Caco-2 (cell line): ENCODE measurements at regions of chr7 and their contacts with region 1.

Region 1: GRCh38 chr7:96075510-96076349 is 246.2 kb downstream of the SLC25A13 start:
- DNase-seq: peak; percentile 62 to 75
- H3K4me3 ChIP-seq: peak overlapping the region; percentile 30
- H3K4me3 Mint-ChIP-seq: peak overlapping the region; percentile 72
- H3K27ac Mint-ChIP-seq: no peak overlapping the region
- H3K4me1 ChIP-seq: 0 out of 2 replicates have a peak, but pooled peaks cover 3% of the 10 kb centered on the region
- H3K4me1 Mint-ChIP-seq: no peaks in the 10 kb centered on the region
- H3K27me3 ChIP-seq: no peaks in the 10 kb centered on the region
- H3K27me3 Mint-ChIP-seq: peaks cover 5% of the 10 kb centered on the region
- CTCF ChIP-seq: peak; percentile 91 to 92

Region 2: DNA sequence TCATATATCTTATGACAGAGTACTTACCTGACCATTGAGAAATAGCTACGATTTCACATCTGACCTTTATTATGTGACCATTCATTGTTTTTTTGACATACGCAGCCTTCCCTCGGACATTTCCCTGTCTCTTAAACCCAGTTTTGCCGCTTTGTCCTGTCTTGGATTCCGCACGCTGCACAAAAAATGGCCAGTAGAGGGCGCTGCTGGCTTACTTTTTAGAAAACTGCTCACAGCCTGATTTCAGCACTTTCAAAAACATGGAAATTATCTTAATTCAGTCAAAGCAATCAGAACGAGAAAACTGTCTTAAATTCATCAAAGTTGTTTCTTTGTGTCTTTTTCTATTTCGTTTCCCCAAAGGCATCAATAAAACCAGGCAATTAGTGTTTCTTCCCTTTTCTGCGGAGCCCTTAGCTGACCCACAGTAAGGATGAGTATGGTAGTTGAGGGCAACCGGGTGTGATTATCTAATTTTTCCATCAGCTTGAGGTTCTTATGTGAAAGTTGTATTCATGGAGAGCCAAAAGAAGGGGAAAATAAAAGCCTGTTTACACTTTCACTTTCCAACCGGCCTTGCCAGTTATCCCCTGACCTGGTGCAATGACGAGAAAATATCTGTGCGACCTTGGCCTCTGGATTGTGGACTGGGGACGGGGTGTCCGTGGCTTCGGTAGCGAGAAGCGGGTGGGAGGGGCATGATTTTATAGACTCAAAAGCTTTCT is 159.0 kb before region 1 on chr7:
- CTCF ChIA-PET with region 1: no interaction called
- POLR2A ChIA-PET with region 1: no interaction called
- intact Hi-C with region 1: loop called (anchors 1 kb)
- DNase-seq: peak; percentile 61 to 77
- H3K4me3 ChIP-seq: no peak overlapping the region
- H3K4me3 Mint-ChIP-seq: no peak overlapping the region
- H3K27ac Mint-ChIP-seq: no peak overlapping the region
- H3K4me1 ChIP-seq: no peaks in the 10 kb centered on the region
- H3K4me1 Mint-ChIP-seq: no peaks in the 10 kb centered on the region
- H3K27me3 ChIP-seq: no peaks in the 10 kb centered on the region
- H3K27me3 Mint-ChIP-seq: no peaks in the 10 kb centered on the region
- CTCF ChIP-seq: peak; percentile 87 to 88

Region 3: GRCh38 chr7:96179837-96180236 is 104.1 kb after region 1 on chr7:
- CTCF ChIA-PET with region 1: no interaction called
- POLR2A ChIA-PET with region 1: no interaction called
- intact Hi-C with region 1: loop called (anchors 5 kb)
- DNase-seq: no peak
- H3K4me3 ChIP-seq: no peak overlapping the region
- H3K4me3 Mint-ChIP-seq: no peak overlapping the region
- H3K27ac Mint-ChIP-seq: no peak overlapping the region
- H3K4me1 ChIP-seq: peaks cover 54% of the 10 kb centered on the region
- H3K4me1 Mint-ChIP-seq: peaks cover 39% of the 10 kb centered on the region
- H3K27me3 ChIP-seq: no peaks in the 10 kb centered on the region
- H3K27me3 Mint-ChIP-seq: no peaks in the 10 kb centered on the region
- CTCF ChIP-seq: no peak

Region 4: GRCh38 chr7:96414931-96415292 is 339.2 kb after region 1 on chr7:
- CTCF ChIA-PET with region 1: no interaction called
- POLR2A ChIA-PET with region 1: no interaction called
- intact Hi-C with region 1: loop called (anchors 5 kb)
- DNase-seq: peak; percentile 37 to 45
- H3K4me3 ChIP-seq: no peak overlapping the region
- H3K4me3 Mint-ChIP-seq: no peak overlapping the region
- H3K27ac Mint-ChIP-seq: peak overlapping the region; percentile 33
- H3K4me1 ChIP-seq: peaks cover 18% of the 10 kb centered on the region
- H3K4me1 Mint-ChIP-seq: peaks cover 15% of the 10 kb centered on the region
- H3K27me3 ChIP-seq: no peaks in the 10 kb centered on the region
- H3K27me3 Mint-ChIP-seq: no peaks in the 10 kb centered on the region
- CTCF ChIP-seq: peak; percentile 27 to 45

Region 5: GRCh38 chr7:97064967-97065587 is 989.3 kb after region 1 on chr7:
- CTCF ChIA-PET with region 1: no interaction called
- POLR2A ChIA-PET with region 1: no interaction called
- intact Hi-C with region 1: loop called (anchors 1 kb)
- DNase-seq: peak in 1 of 2 experiments; percentile 55
- H3K4me3 ChIP-seq: no peak overlapping the region
- H3K4me3 Mint-ChIP-seq: no peak overlapping the region
- H3K27ac Mint-ChIP-seq: no peak overlapping the region
- H3K4me1 ChIP-seq: no peaks in the 10 kb centered on the region
- H3K4me1 Mint-ChIP-seq: no peaks in the 10 kb centered on the region
- H3K27me3 ChIP-seq: no peaks in the 10 kb centered on the region
- H3K27me3 Mint-ChIP-seq: peaks cover 6% of the 10 kb centered on the region
- CTCF ChIP-seq: peak; percentile 49 to 74